ENCODE measurements at regions of chr21 and their contacts with region 1.

Region 1: DNA sequence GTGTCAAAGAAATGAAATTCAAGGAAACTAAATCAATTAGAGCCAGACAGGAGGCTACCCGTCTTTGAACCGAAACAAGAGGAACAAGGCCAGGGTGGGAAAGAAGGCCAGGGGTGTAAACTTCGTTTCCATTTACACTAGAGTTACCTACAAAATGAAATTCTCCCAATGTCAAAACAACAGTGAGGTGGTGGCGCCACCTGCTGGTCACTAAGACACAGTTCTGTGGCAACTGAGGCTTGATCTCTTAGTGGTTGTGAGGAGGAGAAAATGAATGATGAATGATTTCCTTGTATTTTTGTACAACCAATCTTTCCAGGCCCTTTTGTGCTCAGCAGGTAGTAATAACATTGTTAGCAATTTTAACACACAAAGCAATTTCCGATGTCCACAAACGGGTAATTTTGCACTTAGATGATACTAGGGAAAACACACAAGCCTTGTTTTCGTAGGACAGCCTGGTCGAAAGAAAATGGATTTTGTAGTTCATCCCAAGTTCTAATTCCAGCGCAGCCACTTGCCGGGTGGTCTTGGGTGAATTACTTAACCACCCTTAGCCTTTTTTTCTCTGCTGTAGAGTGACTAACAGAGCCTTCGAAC is 54.8 kb upstream of the SOD1 start:
- DNase-seq: peak; percentile 35 to 79 (median 47)
- ATAC-seq: peak in 3 of 4 donors; percentile 54 to 59 (median 58)
- H3K4me3 ChIP-seq: no peak overlapping the region
- H3K27ac ChIP-seq: no peak overlapping the region
- H3K4me1 ChIP-seq: peaks cover 0 to 4% (median 0%) of the 10 kb centered on the region in 12 donors
- H3K27me3 ChIP-seq: no peaks in the 10 kb centered on the region
- CTCF ChIP-seq: peak; percentile 81 to 95 (median 88)
- POLR2A ChIP-seq: no peak

Region 2: DNA sequence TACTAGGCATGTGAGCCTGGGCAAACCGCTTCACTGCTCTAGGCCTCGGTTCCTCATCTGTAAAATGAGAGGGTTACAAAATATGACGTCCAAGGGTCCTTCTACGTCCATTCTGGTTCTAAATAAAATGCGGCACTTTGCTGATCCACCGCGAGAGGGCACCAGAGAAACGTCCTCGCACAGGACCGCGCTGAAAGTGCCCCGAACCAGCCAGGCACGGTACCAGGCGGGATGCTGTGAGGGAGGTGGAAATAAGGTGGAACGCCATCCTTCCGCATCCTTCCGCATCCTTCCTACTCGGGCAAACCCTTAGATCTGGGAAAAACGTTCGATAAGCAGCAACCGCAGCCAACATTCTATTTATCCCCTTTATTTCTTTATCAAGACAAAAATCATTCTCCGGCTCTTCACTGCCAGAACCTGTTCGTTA is 506.1 kb before region 1 on chr21:
- intact Hi-C with region 1: loop called in 9 of 10 experiments (anchors 1 to 10 kb)
- DNase-seq: peak; percentile 48 to 79 (median 62)
- ATAC-seq: peak; percentile 32 to 74 (median 72)
- H3K4me3 ChIP-seq: no peak overlapping the region
- H3K27ac ChIP-seq: no peak overlapping the region
- H3K4me1 ChIP-seq: peaks cover 0 to 15% (median 0%) of the 10 kb centered on the region in 12 donors
- H3K27me3 ChIP-seq: peaks cover 0 to 14% (median 0%) of the 10 kb centered on the region in 9 donors
- CTCF ChIP-seq: peak; percentile 72 to 90 (median 84)
- POLR2A ChIP-seq: no peak

Region 3: DNA sequence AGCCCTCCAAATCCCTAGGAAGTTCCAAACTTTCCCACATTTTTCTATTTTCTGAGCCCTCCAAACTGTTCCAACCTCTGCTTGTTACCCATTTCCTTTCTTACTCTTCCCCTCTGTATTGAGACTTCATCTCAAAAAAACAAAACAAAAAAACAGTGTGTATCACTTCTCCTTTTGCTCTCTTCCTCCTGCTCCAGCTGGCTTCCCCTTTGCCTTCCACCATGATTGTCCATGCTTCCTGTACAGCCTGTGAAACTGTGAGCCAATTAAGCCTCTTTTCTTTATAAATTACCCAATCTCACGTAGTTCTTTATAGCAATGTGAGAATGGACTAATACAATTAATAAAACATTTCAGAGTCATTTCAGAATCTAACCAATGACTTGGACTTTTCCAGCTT is 496.8 kb before region 1 on chr21:
- intact Hi-C with region 1: loop called in 2 of 10 experiments (anchors 5 kb)
- DNase-seq: no peak
- ATAC-seq: peak in 1 of 4 donors; percentile 39
- H3K4me3 ChIP-seq: no peak overlapping the region
- H3K27ac ChIP-seq: peak overlapping the region in 1 of 12 donors; percentile 72
- H3K4me1 ChIP-seq: peaks cover 0 to 34% (median 0%) of the 10 kb centered on the region in 12 donors
- H3K27me3 ChIP-seq: peaks cover 0 to 3% (median 0%) of the 10 kb centered on the region in 9 donors
- CTCF ChIP-seq: no peak
- POLR2A ChIP-seq: no peak

Region 4: GRCh38 chr21:31190516-31190915 is 414.2 kb before region 1 on chr21:
- intact Hi-C with region 1: loop called in 5 of 10 experiments (anchors 5 kb)
- DNase-seq: no peak
- ATAC-seq: no peak
- H3K4me3 ChIP-seq: no peak overlapping the region
- H3K27ac ChIP-seq: no peak overlapping the region
- H3K4me1 ChIP-seq: no peaks in the 10 kb centered on the region
- H3K27me3 ChIP-seq: peaks cover 0 to 6% (median 0%) of the 10 kb centered on the region in 9 donors
- CTCF ChIP-seq: no peak
- POLR2A ChIP-seq: no peak

Region 5: DNA sequence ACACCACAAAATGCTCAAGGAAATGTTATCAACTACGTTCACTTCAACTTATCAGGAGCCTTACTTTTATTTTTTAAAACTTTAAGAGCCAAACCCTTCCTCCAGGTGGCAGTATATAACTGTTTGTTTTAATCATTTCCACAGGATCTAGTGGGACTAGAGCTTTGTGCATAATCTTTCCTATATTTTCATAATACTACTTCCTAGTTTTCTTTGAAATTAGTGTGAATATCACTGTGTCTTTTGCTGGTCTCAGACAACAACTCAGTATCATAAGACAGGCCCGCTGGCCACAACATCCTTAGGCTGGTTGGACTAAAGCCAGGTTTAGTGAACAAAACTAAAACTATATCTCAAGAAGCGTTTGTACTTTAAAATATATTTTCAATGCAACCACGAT is 406.1 kb before region 1 on chr21:
- intact Hi-C with region 1: loop called (anchors 1 to 5 kb)
- DNase-seq: no peak
- ATAC-seq: peak in 3 of 4 donors; percentile 23 to 68 (median 27)
- H3K4me3 ChIP-seq: no peak overlapping the region
- H3K27ac ChIP-seq: no peak overlapping the region
- H3K4me1 ChIP-seq: peaks cover 0 to 22% (median 2%) of the 10 kb centered on the region in 12 donors
- H3K27me3 ChIP-seq: no peaks in the 10 kb centered on the region
- CTCF ChIP-seq: peak; percentile 51 to 77 (median 64)
- POLR2A ChIP-seq: no peak

Region 6: DNA sequence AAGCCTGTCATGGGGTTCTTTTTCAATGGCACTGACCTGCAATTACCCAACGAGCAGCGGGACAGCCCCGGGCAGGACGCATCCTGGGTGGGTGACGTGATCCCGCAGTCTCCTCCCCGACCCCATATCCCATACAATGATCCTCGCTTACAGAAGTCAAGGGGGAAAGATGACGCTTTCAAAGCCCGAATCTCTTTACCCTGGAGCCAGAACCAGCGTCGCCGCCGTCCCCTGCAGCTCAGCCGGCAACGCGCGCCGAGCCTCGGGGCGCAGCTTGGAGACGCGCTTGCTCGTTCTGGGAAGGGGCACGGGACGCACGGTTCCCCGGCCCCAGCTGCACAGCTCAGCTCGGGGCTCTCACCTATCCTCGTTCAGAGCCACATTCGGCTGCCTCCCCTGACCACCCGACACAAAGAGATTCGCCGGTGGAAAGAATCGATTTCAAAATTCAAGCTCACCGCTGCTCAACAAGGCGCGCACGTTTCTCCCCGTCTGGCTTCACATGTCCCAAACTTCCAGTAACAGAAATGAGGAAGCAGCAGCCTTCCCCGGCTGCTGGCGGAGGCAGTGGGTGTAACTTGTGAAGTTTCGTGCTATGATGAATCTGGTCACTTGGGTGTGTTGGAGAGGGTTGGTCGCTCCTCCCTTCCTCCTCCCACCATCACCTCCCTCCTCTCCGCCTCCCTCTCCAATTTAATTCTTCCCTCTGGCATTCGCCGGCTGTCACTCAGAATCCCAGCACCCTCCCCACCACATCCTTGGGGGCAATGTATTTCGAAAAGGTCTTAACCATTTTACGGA is 260.8 kb before region 1 on chr21 and contains the start of gene TIAM1:
- intact Hi-C with region 1: loop called in 3 of 10 experiments (anchors 10 kb)
- DNase-seq: peak; percentile 46 to 75 (median 57)
- ATAC-seq: peak; percentile 63 to 97 (median 92)
- H3K4me3 ChIP-seq: peak within 1 kb of the TSS; percentile 20 to 64 (median 50)
- H3K27ac ChIP-seq: peak within 1 kb of the TSS in 4 of 12 donors; percentile 21 to 67 (median 50)
- H3K4me1 ChIP-seq: peaks cover 0 to 29% (median 0%) of the 10 kb centered on the region in 12 donors
- H3K27me3 ChIP-seq: peaks cover 0 to 51% (median 20%) of the 10 kb centered on the region in 9 donors
- CTCF ChIP-seq: no peak
- POLR2A ChIP-seq: no peak
- total RNA-seq, gene TIAM1: 0.31 to 9.4 (median 1.7) TPM

Measured in heart left ventricle (tissue), 16 donors.